PC-3 (cell line): ENCODE measurements at regions of chr10 and their contacts with region 1.

Region 1: GRCh38 chr10:92290837-92291615 is at the starts of genes CPEB3 and MARCHF5:
- DNase-seq: peak; percentile 94
- ATAC-seq: peak; percentile 96
- H3K4me3 ChIP-seq: peak within 1 kb of the TSS; percentile 85
- H3K27ac ChIP-seq: peak within 1 kb of the TSS; percentile 58
- H3K4me1 ChIP-seq: 0 out of 2 replicates have a peak, but pooled peaks cover 6% of the 10 kb centered on the region
- H3K27me3 ChIP-seq: no peaks in the 10 kb centered on the region
- CTCF ChIP-seq: peak; percentile 45
- total RNA-seq, gene CPEB3: 0.80 and 1.3 TPM in 2 replicates
- total RNA-seq, gene MARCHF5: 6.7 and 7.4 TPM in 2 replicates

Region 2: GRCh38 chr10:92087750-92088395 is 203.2 kb before region 1 on chr10:
- CTCF ChIA-PET with region 1: interaction called, 20 read pairs
- POLR2A ChIA-PET with region 1: no interaction called
- intact Hi-C with region 1: loop called (anchors 1 kb)
- DNase-seq: peak; percentile 89
- ATAC-seq: peak; percentile 100
- H3K4me3 ChIP-seq: no peak overlapping the region
- H3K27ac ChIP-seq: no peak overlapping the region
- H3K4me1 ChIP-seq: peaks cover 12% of the 10 kb centered on the region
- H3K27me3 ChIP-seq: no peaks in the 10 kb centered on the region
- CTCF ChIP-seq: peak; percentile 89

Region 3: GRCh38 chr10:92222603-92223275 is 68.3 kb before region 1 on chr10:
- CTCF ChIA-PET with region 1: interaction called, 6 read pairs
- POLR2A ChIA-PET with region 1: interaction called, 12 read pairs
- intact Hi-C with region 1: loop called (anchors 5 kb)
- DNase-seq: peak; percentile 84
- ATAC-seq: peak; percentile 79
- H3K4me3 ChIP-seq: peak overlapping the region; percentile 44; the same call in 1 of the 2 replicates
- H3K27ac ChIP-seq: peak overlapping the region; percentile 93
- H3K4me1 ChIP-seq: peaks cover 27% of the 10 kb centered on the region
- H3K27me3 ChIP-seq: no peaks in the 10 kb centered on the region
- CTCF ChIP-seq: no peak

Region 4: DNA sequence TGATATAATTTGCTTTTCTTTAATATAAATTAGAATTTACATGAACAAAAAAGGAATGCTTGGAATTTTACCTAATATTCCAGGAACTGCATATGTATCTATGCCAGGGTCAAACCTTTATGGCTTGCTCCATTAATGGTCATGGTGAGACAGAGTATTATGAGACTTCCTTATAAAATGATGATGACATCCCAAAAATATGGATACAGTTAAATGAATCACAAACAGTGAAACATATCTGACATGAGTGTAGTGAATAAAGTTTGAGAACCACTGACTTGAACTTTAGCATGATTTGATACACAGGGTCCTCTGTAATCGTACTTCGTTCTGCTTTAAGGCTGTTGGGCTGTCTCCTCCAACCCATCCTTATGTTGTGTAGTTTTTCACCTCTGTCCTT is 51.8 kb after region 1 on chr10:
- CTCF ChIA-PET with region 1: no interaction called
- POLR2A ChIA-PET with region 1: no interaction called
- intact Hi-C with region 1: loop called (anchors 5 kb)
- DNase-seq: peak; percentile 73
- ATAC-seq: peak; percentile 90
- H3K4me3 ChIP-seq: no peak overlapping the region
- H3K27ac ChIP-seq: peak overlapping the region; percentile 59
- H3K4me1 ChIP-seq: peaks cover 22% of the 10 kb centered on the region
- H3K27me3 ChIP-seq: no peaks in the 10 kb centered on the region
- CTCF ChIP-seq: no peak

Region 5: GRCh38 chr10:92592761-92593618 is 302.0 kb after region 1 on chr10 and contains the start of gene KIF11:
- CTCF ChIA-PET with region 1: no interaction called
- POLR2A ChIA-PET with region 1: interaction called, 6 read pairs
- intact Hi-C with region 1: loop called (anchors 5 kb)
- DNase-seq: peak; percentile 93
- ATAC-seq: peak; percentile 76
- H3K4me3 ChIP-seq: peak within 1 kb of the TSS; percentile 90
- H3K27ac ChIP-seq: peak within 1 kb of the TSS; percentile 95
- H3K4me1 ChIP-seq: peaks cover 25% of the 10 kb centered on the region
- H3K27me3 ChIP-seq: no peaks in the 10 kb centered on the region
- CTCF ChIP-seq: no peak
- total RNA-seq, gene KIF11: 25.5 and 26.2 TPM in 2 replicates